Activated CD8-positive, alpha-beta T cell treated with anti-CD3 and anti-CD28 coated beads for 36 hours (primary cell): ENCODE measurements at regions of chr17 and their contacts with region 1.

Region 1: GRCh38 chr17:47675380-47676198 is 18.4 kb upstream of the TBKBP1 start:
- DNase-seq: no peak
- ATAC-seq: no peak
- H3K4me3 Mint-ChIP-seq: no peak overlapping the region
- H3K27ac Mint-ChIP-seq: peak overlapping the region; percentile 21
- H3K4me1 Mint-ChIP-seq: peaks cover 32% of the 10 kb centered on the region
- H3K27me3 Mint-ChIP-seq: no peaks in the 10 kb centered on the region
- CTCF ChIP-seq: no peak

Region 2: DNA sequence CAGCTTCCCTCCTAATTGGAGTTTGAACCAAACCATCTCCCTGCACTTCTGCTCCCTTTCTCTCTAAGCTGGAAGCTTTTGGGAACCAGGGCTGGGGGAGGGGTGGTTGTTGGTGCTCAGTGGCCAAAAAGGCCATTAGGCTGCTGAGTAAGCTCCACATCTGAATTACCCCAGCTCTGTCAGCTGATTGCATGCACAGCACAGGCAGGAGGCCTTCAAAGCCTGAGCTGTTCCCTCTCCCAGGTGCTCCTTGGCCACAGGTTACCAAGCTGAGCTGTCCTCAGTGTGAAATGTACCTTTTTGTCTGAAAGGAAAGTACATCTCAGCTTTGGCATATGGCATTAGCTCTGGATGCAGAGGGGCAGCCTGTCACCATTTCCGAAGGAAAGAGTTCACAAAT is 12.2 kb after region 1 on chr17:
- CTCF ChIA-PET with region 1: interaction called, 9 read pairs
- POLR2A ChIA-PET with region 1: interaction called, 14 read pairs
- intact Hi-C with region 1: no loop called
- DNase-seq: no peak
- ATAC-seq: no peak
- H3K4me3 Mint-ChIP-seq: no peak overlapping the region
- H3K27ac Mint-ChIP-seq: no peak overlapping the region
- H3K4me1 Mint-ChIP-seq: peaks cover 24% of the 10 kb centered on the region
- H3K27me3 Mint-ChIP-seq: no peaks in the 10 kb centered on the region
- CTCF ChIP-seq: no peak

Region 3: GRCh38 chr17:48704361-48705248 is 1029.0 kb after region 1 on chr17:
- CTCF ChIA-PET with region 1: no interaction called
- POLR2A ChIA-PET with region 1: no interaction called
- intact Hi-C with region 1: no loop called
- DNase-seq: no peak
- ATAC-seq: no peak
- H3K4me3 Mint-ChIP-seq: no peak overlapping the region
- H3K27ac Mint-ChIP-seq: no peak overlapping the region
- H3K4me1 Mint-ChIP-seq: no peaks in the 10 kb centered on the region
- H3K27me3 Mint-ChIP-seq: peaks cover 58% of the 10 kb centered on the region
- CTCF ChIP-seq: no peak